ENCODE measurements at regions of chrX and their contacts with region 1.

Region 1: DNA sequence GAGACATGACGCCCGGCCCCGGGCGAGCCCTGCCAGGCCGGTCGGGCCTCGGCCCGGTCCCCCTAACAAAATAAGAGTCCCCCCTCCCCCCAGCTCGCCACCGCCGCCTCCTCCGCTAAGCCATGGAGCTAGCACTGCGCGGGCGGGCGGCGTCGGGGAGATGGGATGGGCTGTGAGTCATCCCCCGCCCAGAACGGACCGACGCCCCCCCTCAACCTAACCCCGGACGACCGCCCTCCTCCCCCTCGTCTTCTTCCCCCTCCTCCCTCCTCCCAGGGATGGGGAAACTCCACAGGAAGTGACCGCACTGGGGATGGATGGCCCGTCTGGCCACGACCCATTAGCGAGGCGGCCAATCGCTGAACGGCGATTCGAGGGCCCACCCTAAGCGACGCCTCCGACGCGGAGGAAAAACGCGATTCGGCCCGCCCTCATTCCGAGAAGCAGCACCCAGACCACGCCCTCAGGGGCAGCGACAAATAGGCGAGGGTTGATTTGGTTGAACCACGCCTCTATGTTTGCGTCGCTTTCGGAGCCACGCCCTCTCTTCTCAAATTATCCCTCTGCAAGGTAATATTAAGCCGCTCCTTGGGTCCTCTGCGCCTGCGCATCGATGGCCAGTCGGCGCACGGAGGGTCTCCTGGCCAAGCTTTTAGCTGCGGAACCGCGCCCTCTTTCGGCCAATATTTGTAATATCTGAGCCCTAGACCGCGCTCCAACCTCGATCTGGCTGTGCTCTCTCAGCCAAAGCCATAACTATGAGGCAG is at the start of gene TFE3:
- DNase-seq: peak; percentile 77 to 96 (median 91)
- ATAC-seq: peak; percentile 93
- H3K4me3 ChIP-seq: peak within 1 kb of the TSS; percentile 54
- H3K4me3 Mint-ChIP-seq: peak within 1 kb of the TSS; percentile 78 to 95 (median 89)
- H3K27ac ChIP-seq: peak within 1 kb of the TSS; percentile 96
- H3K27ac Mint-ChIP-seq: peak within 1 kb of the TSS; percentile 80 to 96 (median 96)
- H3K4me1 ChIP-seq: peaks cover 5 to 21% of the 10 kb centered on the region in 2 donors
- H3K4me1 Mint-ChIP-seq: peaks cover 18 to 40% (median 31%) of the 10 kb centered on the region in 7 donors
- H3K27me3 ChIP-seq: no peaks in the 10 kb centered on the region
- H3K27me3 Mint-ChIP-seq: no peaks in the 10 kb centered on the region
- total RNA-seq, gene TFE3: 26.2 to 54.2 (median 30.5) TPM

Region 2: GRCh38 chrX:48574270-48575266 is 468.8 kb before region 1 on chrX and contains the start of gene RBM3:
- CTCF ChIA-PET with region 1: no interaction called
- POLR2A ChIA-PET with region 1: interaction called, 10 read pairs
- intact Hi-C with region 1: no loop called
- DNase-seq: peak; percentile 64 to 96 (median 92)
- ATAC-seq: peak; percentile 94
- H3K4me3 ChIP-seq: peak within 1 kb of the TSS; percentile 68
- H3K4me3 Mint-ChIP-seq: peak within 1 kb of the TSS; percentile 88 to 100 (median 97)
- H3K27ac ChIP-seq: peak within 1 kb of the TSS; percentile 99
- H3K27ac Mint-ChIP-seq: peak within 1 kb of the TSS; percentile 95 to 100 (median 99)
- H3K4me1 ChIP-seq: peaks cover 16 to 20% of the 10 kb centered on the region in 2 donors
- H3K4me1 Mint-ChIP-seq: peaks cover 6 to 32% (median 25%) of the 10 kb centered on the region in 7 donors
- H3K27me3 ChIP-seq: no peaks in the 10 kb centered on the region
- H3K27me3 Mint-ChIP-seq: no peaks in the 10 kb centered on the region
- total RNA-seq, gene RBM3: 176 to 374 (median 329) TPM

Region 3: DNA sequence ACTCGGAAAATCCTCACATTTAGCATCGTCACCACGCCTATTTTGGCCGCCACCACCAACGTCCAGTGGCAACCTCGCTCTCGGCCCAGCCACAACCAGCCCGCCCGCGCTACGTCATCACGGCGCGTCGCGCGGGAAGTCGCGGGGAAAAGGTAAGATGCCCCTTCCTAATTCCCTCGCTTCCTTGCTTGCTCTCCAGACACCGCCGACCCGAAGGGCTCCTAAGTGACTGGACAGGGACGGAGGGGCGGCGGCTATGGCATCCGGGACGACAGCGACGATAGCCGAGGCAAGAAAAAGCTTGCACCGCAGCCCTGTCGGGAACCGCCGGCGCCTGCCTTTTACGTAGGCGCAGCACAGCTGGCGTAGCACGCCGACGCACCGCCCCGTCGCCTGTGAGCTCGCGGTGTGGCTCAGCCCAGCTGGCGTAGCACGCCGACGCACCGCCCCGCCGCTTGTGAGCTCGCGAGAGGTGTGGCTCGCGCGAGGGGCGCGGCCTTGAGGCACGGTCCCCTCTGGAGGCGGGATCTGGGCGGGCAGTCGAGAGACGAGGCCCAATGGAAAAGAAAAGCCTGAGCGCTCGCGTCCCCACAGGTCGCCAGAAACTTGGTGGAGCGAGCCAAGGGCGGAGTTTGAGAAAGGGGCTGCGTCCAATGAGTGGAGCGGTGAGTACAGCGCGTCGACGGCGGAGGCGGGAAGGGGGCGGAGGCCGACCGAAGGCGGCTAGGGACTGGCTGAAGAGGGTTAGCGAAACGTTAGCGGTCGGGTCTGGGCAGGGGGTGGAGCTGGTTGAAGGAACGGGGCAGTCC is 241.9 kb before region 1 on chrX and contains the start of gene HDAC6:
- CTCF ChIA-PET with region 1: no interaction called
- POLR2A ChIA-PET with region 1: interaction called, 3 read pairs
- intact Hi-C with region 1: loop called (anchors 1 kb)
- DNase-seq: peak; percentile 76 to 98 (median 95)
- ATAC-seq: peak; percentile 91
- H3K4me3 ChIP-seq: peak within 1 kb of the TSS; percentile 84
- H3K4me3 Mint-ChIP-seq: peak within 1 kb of the TSS; percentile 91 to 98 (median 96)
- H3K27ac ChIP-seq: peak within 1 kb of the TSS; percentile 97
- H3K27ac Mint-ChIP-seq: peak within 1 kb of the TSS; percentile 96 to 99 (median 98)
- H3K4me1 ChIP-seq: peaks cover 6 to 12% of the 10 kb centered on the region in 2 donors
- H3K4me1 Mint-ChIP-seq: peaks cover 10 to 27% (median 16%) of the 10 kb centered on the region in 7 donors
- H3K27me3 ChIP-seq: no peaks in the 10 kb centered on the region
- H3K27me3 Mint-ChIP-seq: no peaks in the 10 kb centered on the region
- total RNA-seq, gene HDAC6: 84.3 to 135 (median 96.1) TPM

Region 4: GRCh38 chrX:48957827-48958634 is 85.4 kb before region 1 on chrX:
- CTCF ChIA-PET with region 1: no interaction called
- POLR2A ChIA-PET with region 1: interaction called, 10 read pairs
- intact Hi-C with region 1: loop called (anchors 1 kb)
- DNase-seq: peak; percentile 84 to 97 (median 95)
- ATAC-seq: peak; percentile 86
- H3K4me3 ChIP-seq: peak overlapping the region; percentile 89
- H3K4me3 Mint-ChIP-seq: peak overlapping the region; percentile 81 to 100 (median 98)
- H3K27ac ChIP-seq: peak overlapping the region; percentile 100
- H3K27ac Mint-ChIP-seq: peak overlapping the region; percentile 98 to 100 (median 100)
- H3K4me1 ChIP-seq: peaks cover 26 to 36% of the 10 kb centered on the region in 2 donors
- H3K4me1 Mint-ChIP-seq: peaks cover 9 to 55% (median 38%) of the 10 kb centered on the region in 7 donors
- H3K27me3 ChIP-seq: no peaks in the 10 kb centered on the region
- H3K27me3 Mint-ChIP-seq: peaks cover 0 to 2% (median 0%) of the 10 kb centered on the region in 5 donors

Region 5: DNA sequence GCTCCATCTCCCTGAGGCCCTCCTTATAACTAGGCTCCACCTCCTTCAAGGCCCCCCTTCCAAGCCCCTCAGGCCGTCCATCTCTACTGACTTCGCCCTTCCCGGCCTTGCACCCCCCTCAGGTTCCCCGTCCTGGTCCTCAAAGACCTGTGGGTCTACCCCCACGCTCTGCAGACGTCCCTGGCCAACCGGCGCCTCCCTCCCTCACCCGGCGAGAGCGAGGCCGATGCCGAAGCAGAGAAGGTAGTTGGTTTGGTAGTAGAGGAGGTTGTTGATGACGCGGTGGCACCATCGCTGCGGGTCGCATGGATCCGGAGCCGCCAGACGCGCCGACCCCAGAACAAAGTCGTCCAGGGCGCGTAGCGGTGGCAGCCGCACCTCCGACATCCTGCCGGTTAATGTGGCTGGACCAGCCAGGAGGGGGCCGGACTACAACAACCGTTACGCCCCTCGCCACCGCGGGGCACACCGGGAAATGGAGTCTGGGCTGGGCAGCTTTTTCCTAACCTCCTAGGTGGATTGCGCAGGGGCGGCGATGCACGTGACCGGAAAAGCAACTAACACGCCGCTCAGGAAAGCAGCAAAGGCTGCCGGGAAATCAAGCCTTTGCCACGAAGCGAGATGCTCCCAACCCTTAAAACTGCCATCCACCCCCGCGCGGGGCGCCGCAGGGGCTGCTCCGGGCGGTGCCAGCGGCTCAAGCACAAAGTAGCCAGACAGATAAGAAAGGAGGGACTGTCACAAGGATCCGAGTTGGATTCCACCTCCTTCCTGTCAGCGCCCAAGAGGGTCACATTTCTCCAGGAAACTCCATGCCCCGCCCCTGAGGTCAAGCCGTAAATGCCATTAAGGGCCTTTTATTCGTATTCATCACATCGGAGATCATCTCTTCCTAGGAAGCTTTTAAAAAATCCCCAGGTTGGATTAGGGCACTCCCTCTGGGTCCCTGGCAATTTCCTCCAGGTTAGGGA is 30.5 kb after region 1 on chrX and contains the start of gene PRAF2:
- CTCF ChIA-PET with region 1: no interaction called
- POLR2A ChIA-PET with region 1: no interaction called
- intact Hi-C with region 1: loop called (anchors 1 to 2 kb)
- DNase-seq: peak; percentile 60 to 90 (median 86)
- ATAC-seq: peak; percentile 99
- H3K4me3 ChIP-seq: peak within 1 kb of the TSS; percentile 61
- H3K4me3 Mint-ChIP-seq: peak within 1 kb of the TSS; percentile 73 to 88 (median 83)
- H3K27ac ChIP-seq: peak within 1 kb of the TSS; percentile 78
- H3K27ac Mint-ChIP-seq: peak within 1 kb of the TSS; percentile 66 to 91 (median 86)
- H3K4me1 ChIP-seq: peaks cover 4 to 10% of the 10 kb centered on the region in 2 donors
- H3K4me1 Mint-ChIP-seq: peaks cover 9 to 25% (median 16%) of the 10 kb centered on the region in 7 donors
- H3K27me3 ChIP-seq: no peaks in the 10 kb centered on the region
- H3K27me3 Mint-ChIP-seq: no peaks in the 10 kb centered on the region
- total RNA-seq, gene PRAF2: 15.9 to 28.3 (median 20.4) TPM

Region 6: DNA sequence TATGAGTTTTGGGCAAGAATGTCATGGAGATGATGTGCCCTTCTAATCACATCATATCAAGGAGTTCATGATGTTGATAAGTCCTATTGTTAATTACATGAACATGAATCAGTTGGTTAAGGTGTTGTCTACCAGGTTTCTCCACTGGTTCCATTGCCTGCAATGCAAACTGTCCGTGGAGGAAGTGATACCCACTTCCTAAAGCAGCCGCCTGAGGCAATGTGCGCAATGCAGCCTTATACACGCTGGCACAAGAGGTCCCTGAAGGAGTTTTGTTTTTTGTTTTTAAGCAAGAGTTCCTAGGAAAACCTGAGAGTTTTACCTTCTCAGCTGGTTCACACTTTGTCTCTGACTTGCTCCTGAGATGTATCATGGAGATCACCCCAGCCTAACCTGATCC is 86.0 kb after region 1 on chrX:
- CTCF ChIA-PET with region 1: no interaction called
- POLR2A ChIA-PET with region 1: no interaction called
- intact Hi-C with region 1: no loop called
- DNase-seq: no peak
- ATAC-seq: no peak
- H3K4me3 ChIP-seq: no peak overlapping the region
- H3K4me3 Mint-ChIP-seq: no peak overlapping the region
- H3K27ac ChIP-seq: no peak overlapping the region
- H3K27ac Mint-ChIP-seq: no peak overlapping the region
- H3K4me1 ChIP-seq: no peaks in the 10 kb centered on the region
- H3K4me1 Mint-ChIP-seq: no peaks in the 10 kb centered on the region
- H3K27me3 ChIP-seq: no peaks in the 10 kb centered on the region
- H3K27me3 Mint-ChIP-seq: no peaks in the 10 kb centered on the region

Region 7: GRCh38 chrX:49161632-49162031 is 118.2 kb after region 1 on chrX:
- CTCF ChIA-PET with region 1: no interaction called
- POLR2A ChIA-PET with region 1: no interaction called
- intact Hi-C with region 1: no loop called
- DNase-seq: no peak
- ATAC-seq: no peak
- H3K4me3 ChIP-seq: no peak overlapping the region
- H3K4me3 Mint-ChIP-seq: no peak overlapping the region
- H3K27ac ChIP-seq: no peak overlapping the region
- H3K27ac Mint-ChIP-seq: peak overlapping the region in 1 of 9 donors; percentile 6
- H3K4me1 ChIP-seq: peaks cover 6 to 9% of the 10 kb centered on the region in 2 donors
- H3K4me1 Mint-ChIP-seq: peaks cover 7 to 22% (median 13%) of the 10 kb centered on the region in 7 donors
- H3K27me3 ChIP-seq: no peaks in the 10 kb centered on the region
- H3K27me3 Mint-ChIP-seq: peaks cover 0 to 2% (median 0%) of the 10 kb centered on the region in 5 donors

Region 8: DNA sequence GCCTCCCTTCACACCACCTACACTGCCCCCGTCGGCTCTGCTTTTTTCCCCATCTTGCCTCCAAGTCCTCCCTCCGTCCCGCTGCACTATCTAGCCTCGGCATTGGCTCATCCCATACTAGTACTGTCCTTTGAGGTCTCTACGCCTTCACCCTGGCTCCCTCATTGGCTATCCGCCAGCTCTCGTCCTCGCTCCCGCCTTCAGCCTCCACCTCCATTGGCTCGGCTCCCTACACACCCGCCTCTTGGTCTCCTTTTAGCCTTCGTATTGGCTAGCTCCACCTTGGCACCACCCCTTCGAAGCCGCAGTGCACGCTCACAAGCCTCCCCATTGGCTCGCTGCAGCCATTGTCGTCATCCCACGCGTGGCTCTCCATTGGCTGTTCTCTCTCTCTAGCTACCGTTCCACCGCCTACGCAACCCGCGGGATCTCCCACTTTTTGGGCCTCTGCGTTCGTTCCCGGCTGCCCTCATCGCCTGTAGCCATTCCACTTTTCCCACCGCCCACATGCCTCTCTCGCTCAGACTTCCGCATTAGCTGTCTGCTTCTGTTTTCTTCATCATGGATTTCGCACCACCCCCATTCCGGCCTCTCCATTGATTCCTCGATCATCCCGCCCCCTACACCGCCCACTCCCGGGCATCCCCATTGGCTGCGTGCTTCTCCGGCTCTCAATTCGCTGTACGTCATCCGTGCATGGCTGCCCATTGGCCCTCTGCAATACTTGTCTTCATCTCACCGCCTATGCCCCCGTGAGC is 225.8 kb after region 1 on chrX:
- CTCF ChIA-PET with region 1: no interaction called
- POLR2A ChIA-PET with region 1: no interaction called
- intact Hi-C with region 1: loop called (anchors 1 to 2 kb)
- DNase-seq: peak; percentile 72 to 97 (median 94)
- ATAC-seq: peak; percentile 89
- H3K4me3 ChIP-seq: peak overlapping the region; percentile 96
- H3K4me3 Mint-ChIP-seq: peak overlapping the region; percentile 91 to 100 (median 96)
- H3K27ac ChIP-seq: peak overlapping the region; percentile 99
- H3K27ac Mint-ChIP-seq: peak overlapping the region; percentile 99 to 100 (median 99)
- H3K4me1 ChIP-seq: peaks cover 30 to 34% of the 10 kb centered on the region in 2 donors
- H3K4me1 Mint-ChIP-seq: peaks cover 17 to 51% (median 42%) of the 10 kb centered on the region in 7 donors
- H3K27me3 ChIP-seq: no peaks in the 10 kb centered on the region
- H3K27me3 Mint-ChIP-seq: no peaks in the 10 kb centered on the region